Posterior vena cava (tissue), 2 donors: ENCODE measurements at regions of chr22 and their contacts with region 1.

Region 1: DNA sequence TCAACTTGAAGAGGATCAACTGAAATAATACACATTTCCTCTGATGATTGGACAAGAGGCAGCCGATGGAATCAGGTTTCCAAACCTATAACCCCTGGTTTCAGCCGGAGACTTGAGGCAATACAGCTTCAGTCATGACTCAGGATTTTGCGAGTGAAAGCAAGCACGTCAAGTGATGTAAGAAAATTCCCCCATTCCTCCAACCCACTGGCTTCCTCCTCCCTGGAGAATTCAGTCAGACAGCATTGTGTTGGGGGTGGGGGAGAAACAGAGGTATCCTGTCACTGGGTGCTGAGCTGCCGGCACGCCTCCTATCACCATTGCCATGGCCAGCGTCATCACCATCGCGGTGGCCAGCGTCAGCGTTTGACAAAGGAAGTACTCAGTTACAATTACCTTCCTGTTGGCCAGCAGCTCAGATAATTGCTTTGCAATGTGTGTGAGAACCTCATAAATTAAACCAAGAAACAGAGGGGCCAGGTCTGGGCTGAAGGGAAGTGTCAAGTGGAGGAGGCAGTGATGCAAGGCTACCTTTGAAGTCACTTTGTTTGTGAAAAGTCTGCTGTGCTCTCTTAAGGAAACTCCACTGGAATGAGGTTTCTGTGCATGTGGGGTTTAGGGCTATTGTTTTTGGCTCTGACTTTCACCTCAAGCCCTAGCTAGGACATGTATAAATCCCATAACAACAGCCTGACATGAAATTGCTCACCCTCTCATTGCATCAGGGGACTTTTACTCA is 50.2 kb downstream of the LIF start:
- DNase-seq: peak; percentile 94

Region 2: GRCh38 chr22:30232716-30233218 is 36.5 kb after region 1 on chr22:
- intact Hi-C with region 1: loop called in 1 of 2 experiments (anchors 2 kb)
- DNase-seq: no peak

Region 3: GRCh38 chr22:30315962-30316576 is 119.8 kb after region 1 on chr22:
- intact Hi-C with region 1: loop called in 1 of 2 experiments (anchors 2 kb)
- DNase-seq: no peak